ENCODE measurements at regions of chr11 and their contacts with region 1.

Region 1: GRCh38 chr11:124673333-124674167 is at the starts of genes SIAE and SPA17:
- DNase-seq: peak; percentile 63 to 92 (median 87)
- ATAC-seq: peak; percentile 91
- H3K4me3 ChIP-seq: peak within 1 kb of the TSS; percentile 76
- H3K4me3 Mint-ChIP-seq: peak within 1 kb of the TSS in 9 of 10 donors; percentile 82 to 94 (median 91)
- H3K27ac ChIP-seq: peak within 1 kb of the TSS; percentile 91
- H3K27ac Mint-ChIP-seq: peak within 1 kb of the TSS in 7 of 9 donors; percentile 94 to 100 (median 98)
- H3K4me1 ChIP-seq: peaks cover 14 to 40% of the 10 kb centered on the region in 2 donors
- H3K4me1 Mint-ChIP-seq: peaks cover 22 to 39% (median 31%) of the 10 kb centered on the region in 7 donors
- H3K27me3 ChIP-seq: no peaks in the 10 kb centered on the region
- H3K27me3 Mint-ChIP-seq: peaks cover 0 to 4% (median 0%) of the 10 kb centered on the region in 5 donors
- total RNA-seq, gene SIAE: 6.2 to 11.3 (median 10.4) TPM
- total RNA-seq, gene SPA17: 1.00 to 1.1 (median 1.0) TPM

Region 2: DNA sequence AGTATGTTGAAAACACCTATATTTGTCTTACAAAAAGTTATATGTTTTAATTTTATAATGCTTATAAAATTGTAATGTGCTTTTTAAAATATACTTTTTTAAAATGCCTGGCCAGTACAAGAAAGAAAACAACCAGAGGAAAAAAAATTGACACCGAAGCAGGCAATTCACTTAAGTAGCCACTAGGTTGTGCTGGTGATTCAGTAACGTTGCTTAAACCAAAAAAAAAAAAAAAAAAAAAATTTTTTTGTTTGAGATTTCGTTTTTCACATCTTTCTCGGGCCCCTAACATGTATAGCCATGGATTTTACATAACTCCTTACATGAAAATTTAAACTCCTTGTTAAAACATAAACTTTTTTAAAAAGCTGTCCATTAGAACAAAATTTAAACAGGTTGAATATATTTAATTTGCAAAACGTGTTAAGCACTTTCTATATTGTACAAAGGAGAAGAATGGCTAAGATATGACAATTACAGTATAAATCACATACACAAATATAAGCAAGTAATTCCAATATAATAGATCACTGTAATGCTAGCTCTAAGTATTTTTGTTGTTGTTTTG is 258.1 kb before region 1 on chr11:
- CTCF ChIA-PET with region 1: no interaction called
- POLR2A ChIA-PET with region 1: no interaction called
- intact Hi-C with region 1: no loop called
- DNase-seq: peak in 3 of 9 donors; percentile 0 to 11 (median 2)
- ATAC-seq: no peak
- H3K4me3 ChIP-seq: no peak overlapping the region
- H3K4me3 Mint-ChIP-seq: no peak overlapping the region
- H3K27ac ChIP-seq: no peak overlapping the region
- H3K27ac Mint-ChIP-seq: no peak overlapping the region
- H3K4me1 ChIP-seq: no peaks in the 10 kb centered on the region
- H3K4me1 Mint-ChIP-seq: peaks cover 0 to 2% (median 0%) of the 10 kb centered on the region in 7 donors
- H3K27me3 ChIP-seq: no peaks in the 10 kb centered on the region
- H3K27me3 Mint-ChIP-seq: peaks cover 6 to 35% (median 26%) of the 10 kb centered on the region in 5 donors

Region 3: GRCh38 chr11:124622531-124623451 is 50.8 kb before region 1 on chr11 and contains the start of gene TBRG1:
- CTCF ChIA-PET with region 1: no interaction called
- POLR2A ChIA-PET with region 1: interaction called, 10 read pairs
- intact Hi-C with region 1: loop called (anchors 1 kb)
- DNase-seq: peak; percentile 58 to 87 (median 81)
- ATAC-seq: peak; percentile 96
- H3K4me3 ChIP-seq: peak within 1 kb of the TSS; percentile 75
- H3K4me3 Mint-ChIP-seq: peak within 1 kb of the TSS; percentile 89 to 100 (median 98)
- H3K27ac ChIP-seq: peak within 1 kb of the TSS; percentile 91
- H3K27ac Mint-ChIP-seq: peak within 1 kb of the TSS; percentile 91 to 100 (median 98)
- H3K4me1 ChIP-seq: peaks cover 7 to 12% of the 10 kb centered on the region in 2 donors
- H3K4me1 Mint-ChIP-seq: peaks cover 21 to 52% (median 46%) of the 10 kb centered on the region in 7 donors
- H3K27me3 ChIP-seq: no peaks in the 10 kb centered on the region
- H3K27me3 Mint-ChIP-seq: peaks cover 0 to 23% (median 7%) of the 10 kb centered on the region in 5 donors
- total RNA-seq, gene TBRG1: 35.5 to 78.6 (median 63.9) TPM

Region 4: DNA sequence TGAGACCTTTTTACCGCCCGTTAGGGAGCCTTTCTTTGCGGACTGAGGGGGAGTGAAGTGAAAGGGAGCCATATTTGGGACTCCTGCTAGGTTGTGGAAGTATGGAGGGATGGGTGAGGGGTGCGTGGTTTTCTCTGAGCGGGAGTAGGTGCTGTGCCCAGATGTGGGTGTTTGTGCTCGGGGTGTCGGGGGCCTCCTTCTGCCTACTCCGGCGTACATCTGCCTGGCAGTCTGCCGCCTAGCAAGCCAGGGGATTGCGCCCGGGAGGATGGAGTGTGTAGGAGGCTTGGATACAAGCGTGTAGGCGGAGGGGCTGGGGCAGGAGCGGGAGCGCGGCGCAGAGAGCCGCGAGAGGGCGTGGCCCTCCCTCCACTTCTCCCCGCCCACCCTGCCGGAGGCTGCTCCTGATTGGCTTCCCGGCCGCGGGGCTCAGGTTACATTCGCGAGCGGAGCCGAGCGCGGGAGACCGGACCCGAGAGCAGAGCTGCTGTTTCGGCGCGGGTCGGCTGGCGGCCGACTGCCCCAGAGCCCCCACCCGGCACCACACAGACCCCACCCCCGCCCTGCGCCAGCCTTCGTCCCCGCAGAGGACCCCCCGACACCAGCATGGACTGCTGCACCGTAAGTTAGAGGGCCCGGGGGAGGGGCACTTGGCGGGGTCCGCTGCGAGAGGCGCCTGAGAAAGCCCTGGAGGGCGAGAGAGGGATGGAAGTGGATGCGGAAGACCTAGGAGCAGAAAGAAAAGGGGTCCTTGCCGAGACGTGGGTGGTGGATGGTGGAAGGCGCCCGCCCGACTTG is 66.1 kb after region 1 on chr11 and contains the start of gene NRGN:
- CTCF ChIA-PET with region 1: interaction called, 6 read pairs
- POLR2A ChIA-PET with region 1: interaction called, 7 read pairs
- intact Hi-C with region 1: loop called (anchors 1 kb)
- DNase-seq: peak; percentile 64 to 84 (median 77)
- ATAC-seq: peak; percentile 94
- H3K4me3 ChIP-seq: peak within 1 kb of the TSS; percentile 63
- H3K4me3 Mint-ChIP-seq: peak within 1 kb of the TSS; percentile 78 to 90 (median 86)
- H3K27ac ChIP-seq: peak within 1 kb of the TSS; percentile 38
- H3K27ac Mint-ChIP-seq: peak within 1 kb of the TSS in 8 of 9 donors; percentile 25 to 75 (median 56)
- H3K4me1 ChIP-seq: peaks cover 0 to 5% of the 10 kb centered on the region in 2 donors
- H3K4me1 Mint-ChIP-seq: peaks cover 18 to 33% (median 19%) of the 10 kb centered on the region in 7 donors
- H3K27me3 ChIP-seq: no peaks in the 10 kb centered on the region
- H3K27me3 Mint-ChIP-seq: peaks cover 0 to 65% (median 9%) of the 10 kb centered on the region in 5 donors
- total RNA-seq, gene NRGN: 1.2 to 48.7 (median 4.9) TPM

Region 5: DNA sequence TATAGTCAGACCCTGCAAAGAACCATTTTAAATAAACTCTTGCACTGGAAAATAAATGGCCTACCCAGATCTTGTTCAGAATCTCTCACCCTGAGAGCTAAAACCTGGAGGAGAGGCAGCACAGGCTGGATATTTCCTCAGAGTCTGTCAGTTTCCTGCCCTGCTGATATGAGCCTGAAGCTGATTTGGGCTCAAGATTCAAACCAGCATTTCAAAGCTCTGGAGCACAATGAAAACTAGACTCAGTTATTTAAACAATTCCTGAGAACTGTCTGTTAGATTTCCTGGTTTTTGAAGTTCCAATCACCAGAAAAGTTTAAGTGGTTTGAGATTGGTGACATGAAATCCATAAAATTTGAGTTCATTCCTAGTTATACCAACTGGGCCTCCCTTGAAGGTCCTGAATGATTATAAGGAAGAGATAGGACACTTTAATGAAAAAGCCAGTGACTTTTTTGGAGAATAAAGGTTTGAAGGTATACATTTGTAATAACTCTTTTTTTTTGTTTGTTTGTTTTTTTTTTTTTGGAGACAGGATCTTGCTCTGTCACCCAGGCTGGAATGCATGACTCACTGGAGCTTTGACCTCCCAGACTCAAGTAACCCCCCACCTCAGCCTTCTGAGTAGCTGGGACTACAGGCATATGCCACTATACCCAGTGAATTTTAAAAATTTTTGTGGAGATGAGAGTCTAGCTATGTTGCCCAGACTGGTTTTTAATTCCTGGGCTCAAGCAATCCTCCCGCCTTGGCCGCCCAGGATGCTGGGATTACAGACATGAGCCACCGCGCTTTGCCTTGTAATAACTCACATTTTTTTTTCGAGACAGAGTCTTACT is 96.5 kb after region 1 on chr11:
- CTCF ChIA-PET with region 1: interaction called, 110 read pairs
- POLR2A ChIA-PET with region 1: interaction called, 54 read pairs
- intact Hi-C with region 1: no loop called
- DNase-seq: no peak
- ATAC-seq: no peak
- H3K4me3 ChIP-seq: no peak overlapping the region
- H3K4me3 Mint-ChIP-seq: no peak overlapping the region
- H3K27ac ChIP-seq: no peak overlapping the region
- H3K27ac Mint-ChIP-seq: peak overlapping the region in 1 of 9 donors; percentile 22
- H3K4me1 ChIP-seq: no peaks in the 10 kb centered on the region
- H3K4me1 Mint-ChIP-seq: peaks cover 0 to 5% (median 0%) of the 10 kb centered on the region in 7 donors
- H3K27me3 ChIP-seq: no peaks in the 10 kb centered on the region
- H3K27me3 Mint-ChIP-seq: no peaks in the 10 kb centered on the region

Region 6: GRCh38 chr11:124837491-124837856 is 163.9 kb after region 1 on chr11:
- CTCF ChIA-PET with region 1: interaction called, 58 read pairs
- POLR2A ChIA-PET with region 1: interaction called, 5 read pairs
- intact Hi-C with region 1: loop called (anchors 1 kb)
- DNase-seq: peak in 5 of 9 donors; percentile 13 to 35 (median 33)
- ATAC-seq: peak; percentile 63
- H3K4me3 ChIP-seq: no peak overlapping the region
- H3K4me3 Mint-ChIP-seq: peak overlapping the region in 6 of 10 donors; percentile 3 to 83 (median 74)
- H3K27ac ChIP-seq: no peak overlapping the region
- H3K27ac Mint-ChIP-seq: peak overlapping the region in 1 of 9 donors; percentile 35
- H3K4me1 ChIP-seq: no peaks in the 10 kb centered on the region
- H3K4me1 Mint-ChIP-seq: peaks cover 9 to 25% (median 16%) of the 10 kb centered on the region in 7 donors
- H3K27me3 ChIP-seq: peaks cover 18 to 20% of the 10 kb centered on the region in 2 donors
- H3K27me3 Mint-ChIP-seq: peaks cover 58 to 85% (median 67%) of the 10 kb centered on the region in 5 donors

Region 7: GRCh38 chr11:124920870-124921609 is 247.5 kb after region 1 on chr11:
- CTCF ChIA-PET with region 1: no interaction called
- POLR2A ChIA-PET with region 1: no interaction called
- intact Hi-C with region 1: loop called in 1 of 2 experiments (anchors 2 kb)
- DNase-seq: peak; percentile 61 to 86 (median 78)
- ATAC-seq: peak; percentile 81
- H3K4me3 ChIP-seq: peak overlapping the region; percentile 46
- H3K4me3 Mint-ChIP-seq: peak overlapping the region; percentile 65 to 85 (median 80)
- H3K27ac ChIP-seq: peak overlapping the region; percentile 47
- H3K27ac Mint-ChIP-seq: peak overlapping the region in 8 of 9 donors; percentile 32 to 85 (median 62)
- H3K4me1 ChIP-seq: peaks cover 0 to 21% of the 10 kb centered on the region in 2 donors
- H3K4me1 Mint-ChIP-seq: peaks cover 8 to 46% (median 40%) of the 10 kb centered on the region in 7 donors
- H3K27me3 ChIP-seq: no peaks in the 10 kb centered on the region
- H3K27me3 Mint-ChIP-seq: peaks cover 0 to 12% (median 0%) of the 10 kb centered on the region in 5 donors

Region 8: DNA sequence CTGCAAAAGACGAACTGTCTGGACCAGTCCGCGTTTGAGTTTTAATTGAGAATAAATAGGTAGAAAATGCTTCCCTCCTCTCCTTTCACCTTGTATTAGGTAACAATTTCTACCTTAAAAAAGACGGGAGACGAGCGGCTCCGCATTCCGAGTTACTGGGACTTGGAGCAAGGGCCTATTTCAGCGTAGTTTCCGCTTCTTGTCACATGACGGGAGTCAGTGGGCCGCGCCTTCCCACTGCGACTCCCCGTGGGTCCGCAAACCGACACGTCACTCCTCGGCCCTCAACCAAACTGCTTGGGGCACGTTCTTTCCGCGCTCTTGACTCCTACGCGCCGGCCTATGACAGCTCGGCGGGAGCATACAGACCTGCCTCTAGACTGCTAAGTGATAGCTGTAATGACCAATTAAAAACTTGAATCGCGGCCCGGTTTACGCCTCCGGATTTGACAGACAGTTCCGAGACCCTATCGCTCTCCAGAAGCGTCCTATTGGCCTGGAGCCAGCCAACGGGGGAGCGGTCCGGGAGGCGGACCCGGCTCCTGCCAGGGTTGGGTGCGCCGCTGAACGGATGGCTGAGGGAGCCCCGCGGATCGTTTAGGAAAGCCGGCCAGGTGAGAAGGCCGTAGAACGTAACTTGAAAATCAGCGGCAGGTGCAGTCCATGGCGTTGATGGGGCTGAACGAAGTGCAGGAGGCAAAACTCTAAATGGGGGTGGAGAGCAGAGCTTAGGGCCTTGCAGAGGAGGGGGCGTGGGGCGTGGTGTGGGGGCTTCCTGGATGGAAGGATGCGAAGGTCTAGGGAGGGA is 919.0 kb after region 1 on chr11 and contains the start of gene STT3A:
- CTCF ChIA-PET with region 1: no interaction called
- POLR2A ChIA-PET with region 1: no interaction called
- intact Hi-C with region 1: loop called in 1 of 2 experiments (anchors 2 kb)
- DNase-seq: peak; percentile 94 to 99 (median 99)
- ATAC-seq: peak; percentile 96
- H3K4me3 ChIP-seq: peak within 1 kb of the TSS; percentile 94
- H3K4me3 Mint-ChIP-seq: peak within 1 kb of the TSS; percentile 88 to 99 (median 96)
- H3K27ac ChIP-seq: peak within 1 kb of the TSS; percentile 95
- H3K27ac Mint-ChIP-seq: peak within 1 kb of the TSS; percentile 94 to 100 (median 99)
- H3K4me1 ChIP-seq: peaks cover 13% of the 10 kb centered on the region in 2 donors
- H3K4me1 Mint-ChIP-seq: peaks cover 30 to 62% (median 53%) of the 10 kb centered on the region in 7 donors
- H3K27me3 ChIP-seq: no peaks in the 10 kb centered on the region
- H3K27me3 Mint-ChIP-seq: no peaks in the 10 kb centered on the region
- total RNA-seq, gene STT3A: 39.6 to 153 (median 84.5) TPM